ENCODE measurements at regions of chr19 and their contacts with region 1.

Region 1: GRCh38 chr19:16361254-16361653 is 36.6 kb downstream of the KLF2 start:
- DNase-seq: no peak
- ATAC-seq: no peak
- H3K4me3 Mint-ChIP-seq: no peak overlapping the region
- H3K27ac Mint-ChIP-seq: peak overlapping the region; percentile 45
- H3K4me1 Mint-ChIP-seq: peaks cover 63% of the 10 kb centered on the region
- H3K27me3 Mint-ChIP-seq: peaks cover 31% of the 10 kb centered on the region

Region 2: DNA sequence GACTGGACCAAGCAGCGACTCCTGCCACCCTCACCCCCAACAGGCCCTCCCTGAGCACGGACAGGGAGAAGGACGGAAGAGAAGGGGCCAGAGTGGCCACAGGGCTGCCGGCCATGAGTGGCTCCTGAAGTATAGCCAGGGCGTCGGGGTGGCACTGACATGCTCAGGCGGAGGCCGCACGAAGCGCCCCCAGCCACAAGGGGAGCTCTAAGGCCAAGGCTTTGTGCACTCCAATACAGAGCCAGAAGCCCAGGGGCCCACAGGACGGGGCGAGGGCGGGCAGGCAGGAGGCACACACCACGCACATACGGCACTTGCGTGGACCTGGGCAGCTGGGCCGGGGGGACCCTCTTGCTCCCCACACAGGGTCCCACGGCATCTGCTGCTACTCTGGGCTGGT is 15.4 kb after region 1 on chr19:
- CTCF ChIA-PET with region 1: interaction called, 16 read pairs
- DNase-seq: peak; percentile 53
- ATAC-seq: peak; percentile 25
- H3K4me3 Mint-ChIP-seq: no peak overlapping the region
- H3K27ac Mint-ChIP-seq: no peak overlapping the region
- H3K4me1 Mint-ChIP-seq: peaks cover 38% of the 10 kb centered on the region
- H3K27me3 Mint-ChIP-seq: peaks cover 5% of the 10 kb centered on the region

Measured in activated CD8-positive, alpha-beta memory T cell treated with anti-CD3 and anti-CD28 coated beads, Interleukin-2, amount 10 ng/mL, durations not matched to agents 7 days and 5 days (primary cell).